ENCODE measurements at regions of chr2 and their contacts with region 1.

Region 1: DNA sequence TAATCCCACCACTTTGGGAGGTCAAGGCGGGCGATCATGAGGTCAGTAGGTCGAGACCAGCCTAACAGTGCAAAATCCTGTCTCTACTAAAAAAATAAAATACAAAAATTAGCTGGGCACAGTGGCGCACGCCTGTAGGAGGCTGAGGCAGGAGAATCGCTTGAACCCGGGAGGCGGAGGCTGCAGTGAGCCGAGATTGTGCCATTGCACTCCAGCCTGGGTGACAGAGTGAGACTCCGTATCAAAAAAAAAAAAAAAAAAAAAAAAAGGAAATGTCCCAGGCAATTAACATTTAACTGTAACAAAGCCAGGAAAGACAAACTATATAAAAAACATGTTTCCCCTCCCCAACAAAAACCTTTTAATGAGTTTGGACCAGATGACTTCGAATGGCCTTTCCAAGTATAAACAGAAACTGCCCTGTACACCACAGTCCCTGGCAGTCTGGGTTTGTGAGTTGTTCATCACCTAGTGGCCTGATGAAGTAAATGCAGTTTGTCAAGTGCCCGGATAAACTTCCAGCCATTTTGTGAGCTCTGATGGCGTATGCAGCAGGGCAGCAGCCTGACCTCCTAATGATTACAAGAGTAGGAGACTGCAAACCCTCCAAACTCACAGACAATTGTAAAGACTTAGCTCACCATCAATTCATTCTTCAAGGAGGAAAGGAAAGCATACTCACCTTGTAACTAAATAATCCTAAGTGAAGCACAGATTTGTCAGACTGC is 16.6 kb upstream of the PCBP1 start:
- DNase-seq: peak in 9 of 10 donors; percentile 38 to 81 (median 65)
- ATAC-seq: peak; percentile 63 to 68
- H3K4me3 Mint-ChIP-seq: peak overlapping the region; percentile 54 to 86 (median 76)
- H3K27ac Mint-ChIP-seq: peak overlapping the region; percentile 86 to 100 (median 96)
- H3K4me1 Mint-ChIP-seq: peaks cover 17 to 57% (median 52%) of the 10 kb centered on the region in 4 donors
- H3K27me3 Mint-ChIP-seq: no peaks in the 10 kb centered on the region

Region 2: DNA sequence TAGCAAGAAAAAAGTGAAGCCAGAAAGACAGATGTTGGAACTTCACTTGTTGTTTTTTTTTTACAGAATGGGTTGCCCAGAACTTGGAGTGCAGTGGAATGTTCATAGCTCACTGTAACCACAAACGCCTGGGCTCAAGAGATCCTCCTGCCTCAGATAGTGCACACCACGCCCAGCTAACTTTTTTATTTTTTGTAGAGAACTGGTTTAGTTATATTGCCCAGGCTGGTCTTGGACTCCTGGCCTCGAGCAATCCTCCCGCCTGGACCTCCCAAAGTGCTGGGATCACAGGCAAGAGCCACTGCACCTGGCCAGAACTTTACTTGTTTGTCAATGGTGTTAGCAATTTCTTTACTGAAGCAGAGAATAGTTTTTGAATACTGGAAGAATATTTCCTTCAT is 97.4 kb before region 1 on chr2:
- POLR2A ChIA-PET with region 1: no interaction called
- DNase-seq: peak in 1 of 10 donors; percentile 6
- ATAC-seq: no peak
- H3K4me3 Mint-ChIP-seq: no peak overlapping the region
- H3K27ac Mint-ChIP-seq: no peak overlapping the region
- H3K4me1 Mint-ChIP-seq: peaks cover 13 to 24% (median 17%) of the 10 kb centered on the region in 4 donors
- H3K27me3 Mint-ChIP-seq: peaks cover 0 to 4% (median 0%) of the 10 kb centered on the region in 5 donors

Region 3: DNA sequence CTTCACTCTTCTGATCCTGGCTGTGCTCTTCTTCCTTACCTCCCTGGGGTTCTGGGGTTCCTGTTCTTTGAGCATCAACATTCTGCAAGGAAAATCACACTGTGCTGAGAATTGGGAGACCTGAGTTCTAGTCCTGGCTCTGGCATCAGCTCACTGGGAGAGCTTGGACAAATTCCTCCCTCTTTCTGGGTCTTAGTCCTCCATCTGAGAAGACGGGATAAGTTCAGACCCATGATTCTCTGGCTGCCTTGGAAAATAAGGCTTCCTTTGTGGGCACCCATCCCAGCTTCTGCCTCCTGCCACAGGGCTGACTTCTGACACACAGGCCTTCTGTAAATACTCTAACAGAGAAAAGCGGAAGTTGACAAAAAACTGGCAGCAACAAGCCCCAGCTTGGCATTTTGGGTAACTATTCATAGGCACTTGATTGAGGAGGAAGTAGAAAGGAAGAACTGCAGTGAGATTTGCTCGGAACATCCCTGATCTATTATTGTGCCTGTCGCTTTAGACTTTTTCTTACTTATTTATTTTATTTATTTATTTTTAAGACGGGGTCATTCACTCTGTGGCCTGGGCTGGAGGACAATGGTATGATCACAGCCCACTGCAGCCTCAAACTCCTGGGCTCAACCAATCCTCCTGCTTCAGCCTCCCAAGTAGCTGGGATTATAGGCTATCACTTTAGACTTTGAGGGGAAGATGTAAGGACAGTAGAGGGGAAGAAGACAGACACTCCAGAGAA is 24.4 kb after region 1 on chr2:
- POLR2A ChIA-PET with region 1: interaction called, 239 read pairs
- DNase-seq: peak in 9 of 10 donors; percentile 53 to 81 (median 57)
- ATAC-seq: peak; percentile 83 to 91
- H3K4me3 Mint-ChIP-seq: peak overlapping the region; percentile 80 to 93 (median 90)
- H3K27ac Mint-ChIP-seq: peak overlapping the region; percentile 95 to 100 (median 96)
- H3K4me1 Mint-ChIP-seq: peaks cover 28 to 58% (median 50%) of the 10 kb centered on the region in 4 donors
- H3K27me3 Mint-ChIP-seq: no peaks in the 10 kb centered on the region